ENCODE measurements at regions of chr9 and their contacts with region 1.

Region 1: DNA sequence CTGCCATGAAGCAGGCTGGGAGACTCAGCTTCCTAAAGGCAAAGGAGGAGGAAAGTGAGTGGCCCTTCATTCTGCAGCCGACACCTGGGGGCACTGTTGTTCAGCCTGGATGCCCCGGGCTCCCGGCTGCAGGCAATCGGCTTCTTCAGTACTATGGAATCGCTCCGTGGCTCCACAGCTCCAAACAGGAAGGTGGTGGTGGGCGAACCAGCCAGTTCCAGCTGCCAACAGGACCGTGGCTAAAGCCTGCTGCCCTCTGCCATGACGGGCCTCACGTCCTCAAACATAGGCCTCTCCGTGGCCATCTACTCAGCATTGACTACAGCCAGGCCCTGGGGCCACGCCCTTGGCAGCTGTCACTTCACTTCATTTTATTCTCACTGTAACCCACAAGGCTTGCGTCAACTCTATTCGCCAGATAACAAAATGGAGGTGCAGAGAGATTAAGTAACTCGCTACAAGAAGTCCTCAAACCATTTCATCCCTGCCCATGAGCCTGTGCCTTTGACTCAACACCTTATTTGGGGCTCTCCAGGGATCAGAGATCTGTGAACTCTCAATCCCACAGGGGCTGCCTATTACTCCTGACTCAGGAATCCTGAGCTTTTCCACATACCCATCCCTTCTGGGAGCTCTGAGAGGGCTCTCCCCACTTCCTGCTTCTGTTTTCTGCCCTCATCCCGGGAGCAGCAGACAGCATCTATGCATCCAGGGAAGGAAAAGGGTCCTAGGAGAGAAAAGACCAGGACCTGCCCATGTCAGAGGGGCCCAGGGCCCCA is 38.0 kb downstream of the PAX5 start:
- DNase-seq: peak; percentile 36
- H3K4me3 Mint-ChIP-seq: no peak overlapping the region
- H3K27ac Mint-ChIP-seq: no peak overlapping the region
- H3K4me1 Mint-ChIP-seq: peaks cover 3% of the 10 kb centered on the region
- H3K27me3 Mint-ChIP-seq: peaks cover 20% of the 10 kb centered on the region

Region 2: GRCh38 chr9:36873247-36873875 is 122.8 kb before region 1 on chr9:
- intact Hi-C with region 1: loop called (anchors 1 kb)
- DNase-seq: peak; percentile 54
- H3K4me3 Mint-ChIP-seq: no peak overlapping the region
- H3K27ac Mint-ChIP-seq: no peak overlapping the region
- H3K4me1 Mint-ChIP-seq: no peaks in the 10 kb centered on the region
- H3K27me3 Mint-ChIP-seq: peaks cover 2% of the 10 kb centered on the region

Region 3: GRCh38 chr9:37053684-37054362 is 57.7 kb after region 1 on chr9:
- intact Hi-C with region 1: no loop called
- DNase-seq: no peak
- H3K4me3 Mint-ChIP-seq: no peak overlapping the region
- H3K27ac Mint-ChIP-seq: no peak overlapping the region
- H3K4me1 Mint-ChIP-seq: no peaks in the 10 kb centered on the region
- H3K27me3 Mint-ChIP-seq: peaks cover 60% of the 10 kb centered on the region

Region 4: DNA sequence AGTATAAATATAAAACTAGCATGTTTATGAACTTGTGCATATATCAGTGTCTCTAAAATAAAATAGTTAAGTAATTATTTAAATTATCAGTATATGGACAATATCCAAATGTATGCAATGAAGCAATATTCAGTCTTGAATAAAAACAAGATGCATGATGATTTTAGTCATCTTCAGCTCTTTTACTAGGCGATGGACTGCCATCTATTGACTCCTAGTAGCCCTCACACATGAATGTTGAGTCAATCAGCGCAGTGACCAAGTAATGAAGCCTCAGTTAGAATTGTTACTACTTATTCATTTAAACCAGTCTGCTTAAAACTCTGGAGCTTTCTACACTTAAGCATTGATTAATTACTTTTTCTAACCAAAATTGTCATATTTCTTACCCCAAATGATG is 333.5 kb after region 1 on chr9:
- intact Hi-C with region 1: loop called (anchors 10 kb)
- DNase-seq: no peak
- H3K4me3 Mint-ChIP-seq: no peak overlapping the region
- H3K27ac Mint-ChIP-seq: no peak overlapping the region
- H3K4me1 Mint-ChIP-seq: peaks cover 1% of the 10 kb centered on the region
- H3K27me3 Mint-ChIP-seq: no peaks in the 10 kb centered on the region

Region 5: GRCh38 chr9:37364751-37365360 is 368.7 kb after region 1 on chr9:
- intact Hi-C with region 1: loop called (anchors 10 kb)
- DNase-seq: no peak
- H3K4me3 Mint-ChIP-seq: no peak overlapping the region
- H3K27ac Mint-ChIP-seq: no peak overlapping the region
- H3K4me1 Mint-ChIP-seq: no peaks in the 10 kb centered on the region
- H3K27me3 Mint-ChIP-seq: no peaks in the 10 kb centered on the region

Region 6: DNA sequence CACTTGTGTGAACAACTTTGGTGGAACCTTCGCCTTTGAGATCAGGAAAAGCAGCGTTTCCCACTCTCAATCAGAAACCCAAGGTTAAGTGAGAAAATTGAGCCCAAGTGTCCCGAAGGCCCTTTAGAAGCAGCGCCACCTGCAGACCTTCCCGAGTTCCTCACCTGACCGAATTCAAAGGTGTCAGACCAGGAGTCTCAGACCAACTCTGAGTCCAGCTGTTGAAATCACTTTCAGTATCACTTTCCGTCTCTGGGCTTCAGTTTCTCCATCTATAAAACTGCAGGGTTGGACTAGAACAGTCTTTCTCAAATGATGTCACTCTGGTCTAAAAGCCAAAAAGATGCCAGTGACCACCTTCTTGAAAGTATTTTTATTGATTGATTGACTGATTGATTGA is 394.6 kb after region 1 on chr9:
- intact Hi-C with region 1: loop called (anchors 10 kb)
- DNase-seq: no peak
- H3K4me3 Mint-ChIP-seq: no peak overlapping the region
- H3K27ac Mint-ChIP-seq: no peak overlapping the region
- H3K4me1 Mint-ChIP-seq: no peaks in the 10 kb centered on the region
- H3K27me3 Mint-ChIP-seq: no peaks in the 10 kb centered on the region